HCT116 (cell line): ENCODE measurements at regions of chr16 and their contacts with region 1.

Region 1: GRCh38 chr16:70653809-70654771 is 7.7 kb downstream of the IL34 start:
- DNase-seq: peak; percentile 67
- ATAC-seq: peak; percentile 86
- H3K4me3 ChIP-seq: peak overlapping the region in 1 of 2 experiments; percentile 22; a peak in 1 of 4 replicates
- H3K27ac ChIP-seq: no peak overlapping the region
- H3K4me1 ChIP-seq: peaks cover 0 to 8% of the 10 kb centered on the region in 2 experiments; a peak in 2 of 4 replicates
- H3K27me3 ChIP-seq: no peaks in the 10 kb centered on the region
- CTCF ChIP-seq: peak; percentile 82 to 93 (median 91)
- POLR2A ChIP-seq: no peak
- RAD21 ChIP-seq: peak; percentile 98

Region 2: GRCh38 chr16:69796351-69797118 is 857.6 kb before region 1 on chr16:
- CTCF ChIA-PET with region 1: no interaction called
- POLR2A ChIA-PET with region 1: no interaction called
- RAD21 ChIA-PET with region 1: no interaction called
- intact Hi-C with region 1: loop called (anchors 5 kb)
- DNase-seq: peak; percentile 45
- ATAC-seq: peak; percentile 90
- H3K4me3 ChIP-seq: no peak overlapping the region
- H3K27ac ChIP-seq: no peak overlapping the region
- H3K4me1 ChIP-seq: no peaks in the 10 kb centered on the region
- H3K27me3 ChIP-seq: no peaks in the 10 kb centered on the region
- CTCF ChIP-seq: peak; percentile 77 to 86 (median 80)
- POLR2A ChIP-seq: no peak
- RAD21 ChIP-seq: peak; percentile 84

Region 3: DNA sequence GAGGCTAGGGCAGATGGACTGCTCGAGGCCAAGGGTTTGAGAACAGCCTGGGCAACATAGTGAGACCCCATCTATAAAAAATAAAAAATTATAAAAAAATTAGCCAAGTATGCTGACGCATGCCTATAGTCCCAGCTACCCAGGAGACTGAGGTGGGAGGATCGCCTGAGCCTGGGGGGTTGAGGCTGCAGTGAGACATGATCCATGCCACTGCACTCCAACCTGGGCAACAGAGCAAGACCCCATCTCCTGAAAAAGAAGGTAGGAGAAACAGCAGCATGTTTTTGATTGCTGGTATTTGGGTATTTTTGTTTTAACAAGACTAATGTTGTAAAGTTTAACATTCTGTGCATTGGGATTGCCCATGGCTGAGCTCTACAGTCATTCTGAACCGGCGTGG is 316.3 kb before region 1 on chr16:
- CTCF ChIA-PET with region 1: no interaction called
- POLR2A ChIA-PET with region 1: no interaction called
- RAD21 ChIA-PET with region 1: no interaction called
- intact Hi-C with region 1: loop called (anchors 5 kb)
- DNase-seq: no peak
- ATAC-seq: no peak
- H3K4me3 ChIP-seq: no peak overlapping the region
- H3K27ac ChIP-seq: no peak overlapping the region
- H3K4me1 ChIP-seq: no peaks in the 10 kb centered on the region; a peak in 1 of 4 replicates
- H3K27me3 ChIP-seq: no peaks in the 10 kb centered on the region
- CTCF ChIP-seq: no peak
- POLR2A ChIP-seq: no peak
- RAD21 ChIP-seq: no peak

Region 4: GRCh38 chr16:70364399-70364798 is 289.7 kb before region 1 on chr16:
- CTCF ChIA-PET with region 1: interaction called, 19 read pairs
- POLR2A ChIA-PET with region 1: no interaction called
- RAD21 ChIA-PET with region 1: no interaction called
- intact Hi-C with region 1: no loop called
- DNase-seq: no peak
- ATAC-seq: no peak
- H3K4me3 ChIP-seq: no peak overlapping the region
- H3K27ac ChIP-seq: no peak overlapping the region
- H3K4me1 ChIP-seq: no peaks in the 10 kb centered on the region
- H3K27me3 ChIP-seq: no peaks in the 10 kb centered on the region
- CTCF ChIP-seq: no peak
- POLR2A ChIP-seq: no peak
- RAD21 ChIP-seq: no peak

Region 5: DNA sequence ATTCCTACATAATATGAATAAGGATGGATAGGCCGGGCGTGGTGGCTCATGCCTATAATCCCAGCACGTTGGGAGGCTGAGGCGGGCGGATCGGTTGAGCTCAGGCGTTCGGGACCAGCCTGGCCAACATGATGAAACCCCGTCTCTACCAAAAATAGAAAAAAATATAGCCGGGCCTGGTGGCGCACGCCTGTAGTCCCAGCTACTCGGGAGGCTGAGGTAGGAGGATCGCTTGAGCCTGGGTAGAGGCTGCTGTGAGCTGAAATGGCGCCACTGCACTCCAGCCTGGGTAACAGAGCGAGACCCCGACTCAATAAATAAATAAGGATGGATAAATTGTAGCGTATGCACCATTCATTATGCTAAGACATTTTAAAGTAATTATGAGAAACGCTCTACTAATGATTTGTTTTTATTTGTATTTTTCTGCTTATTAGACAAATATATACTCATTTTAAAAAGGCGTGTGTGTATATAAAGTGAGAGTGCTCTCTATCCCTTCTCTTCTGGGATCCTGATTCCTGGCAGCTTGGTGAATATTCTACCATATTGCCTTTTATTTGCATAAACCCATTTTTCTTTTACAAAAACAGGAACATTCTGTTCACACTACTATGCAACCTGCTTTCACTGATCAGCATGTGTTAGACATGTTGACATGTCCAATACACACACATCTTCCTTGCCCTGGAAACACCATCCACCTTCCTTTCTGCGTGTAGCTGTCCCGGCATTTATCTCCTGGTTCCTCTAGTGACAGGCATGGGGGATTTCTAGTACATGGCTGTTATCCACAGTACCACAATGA is 281.0 kb before region 1 on chr16:
- CTCF ChIA-PET with region 1: interaction called, 19 read pairs
- POLR2A ChIA-PET with region 1: no interaction called
- RAD21 ChIA-PET with region 1: no interaction called
- intact Hi-C with region 1: loop called (anchors 2 kb)
- DNase-seq: no peak
- ATAC-seq: no peak
- H3K4me3 ChIP-seq: no peak overlapping the region
- H3K27ac ChIP-seq: no peak overlapping the region
- H3K4me1 ChIP-seq: no peaks in the 10 kb centered on the region; a peak in 1 of 4 replicates
- H3K27me3 ChIP-seq: no peaks in the 10 kb centered on the region
- CTCF ChIP-seq: no peak
- POLR2A ChIP-seq: no peak
- RAD21 ChIP-seq: no peak

Region 6: DNA sequence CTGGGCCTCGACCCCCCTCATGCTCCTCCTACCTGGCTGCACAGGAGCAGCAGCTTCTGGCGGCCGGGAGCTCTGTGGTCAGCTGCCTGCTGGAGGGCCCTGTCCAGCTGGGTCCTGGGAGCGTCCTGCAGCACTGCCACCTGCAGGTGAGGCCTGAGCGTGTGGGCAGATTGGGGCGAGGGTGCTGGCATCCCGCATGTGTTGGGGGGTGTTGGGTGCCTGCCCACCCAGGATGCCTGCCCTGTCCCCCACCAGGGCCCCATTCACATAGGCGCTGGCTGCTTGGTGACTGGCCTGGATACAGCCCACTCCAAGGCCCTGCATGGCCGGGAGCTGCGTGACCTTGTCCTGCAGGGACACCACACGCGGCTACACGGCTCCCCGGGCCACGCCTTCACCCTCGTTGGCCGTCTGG is 183.2 kb before region 1 on chr16:
- CTCF ChIA-PET with region 1: no interaction called
- POLR2A ChIA-PET with region 1: no interaction called
- RAD21 ChIA-PET with region 1: no interaction called
- intact Hi-C with region 1: no loop called
- DNase-seq: no peak
- ATAC-seq: peak; percentile 64
- H3K4me3 ChIP-seq: no peak overlapping the region
- H3K27ac ChIP-seq: no peak overlapping the region
- H3K4me1 ChIP-seq: peaks cover 12 to 13% of the 10 kb centered on the region in 2 experiments
- H3K27me3 ChIP-seq: no peaks in the 10 kb centered on the region
- CTCF ChIP-seq: peak; percentile 29 to 62 (median 43); a peak in 5 of 6 replicates
- POLR2A ChIP-seq: no peak
- RAD21 ChIP-seq: peak; percentile 75

Region 7: GRCh38 chr16:70523076-70523742 is 130.9 kb before region 1 on chr16 and contains the start of gene COG4:
- CTCF ChIA-PET with region 1: no interaction called
- POLR2A ChIA-PET with region 1: no interaction called
- RAD21 ChIA-PET with region 1: no interaction called
- intact Hi-C with region 1: loop called (anchors 10 kb)
- DNase-seq: peak; percentile 72
- ATAC-seq: peak; percentile 77
- H3K4me3 ChIP-seq: peak within 1 kb of the TSS; percentile 68 to 72
- H3K27ac ChIP-seq: peak within 1 kb of the TSS; percentile 71
- H3K4me1 ChIP-seq: peaks cover 7 to 16% of the 10 kb centered on the region in 2 experiments; a peak in 3 of 4 replicates
- H3K27me3 ChIP-seq: no peaks in the 10 kb centered on the region
- CTCF ChIP-seq: no peak
- POLR2A ChIP-seq: peak; percentile 41
- RAD21 ChIP-seq: no peak
- total RNA-seq, gene COG4: 54.2 TPM

Region 8: DNA sequence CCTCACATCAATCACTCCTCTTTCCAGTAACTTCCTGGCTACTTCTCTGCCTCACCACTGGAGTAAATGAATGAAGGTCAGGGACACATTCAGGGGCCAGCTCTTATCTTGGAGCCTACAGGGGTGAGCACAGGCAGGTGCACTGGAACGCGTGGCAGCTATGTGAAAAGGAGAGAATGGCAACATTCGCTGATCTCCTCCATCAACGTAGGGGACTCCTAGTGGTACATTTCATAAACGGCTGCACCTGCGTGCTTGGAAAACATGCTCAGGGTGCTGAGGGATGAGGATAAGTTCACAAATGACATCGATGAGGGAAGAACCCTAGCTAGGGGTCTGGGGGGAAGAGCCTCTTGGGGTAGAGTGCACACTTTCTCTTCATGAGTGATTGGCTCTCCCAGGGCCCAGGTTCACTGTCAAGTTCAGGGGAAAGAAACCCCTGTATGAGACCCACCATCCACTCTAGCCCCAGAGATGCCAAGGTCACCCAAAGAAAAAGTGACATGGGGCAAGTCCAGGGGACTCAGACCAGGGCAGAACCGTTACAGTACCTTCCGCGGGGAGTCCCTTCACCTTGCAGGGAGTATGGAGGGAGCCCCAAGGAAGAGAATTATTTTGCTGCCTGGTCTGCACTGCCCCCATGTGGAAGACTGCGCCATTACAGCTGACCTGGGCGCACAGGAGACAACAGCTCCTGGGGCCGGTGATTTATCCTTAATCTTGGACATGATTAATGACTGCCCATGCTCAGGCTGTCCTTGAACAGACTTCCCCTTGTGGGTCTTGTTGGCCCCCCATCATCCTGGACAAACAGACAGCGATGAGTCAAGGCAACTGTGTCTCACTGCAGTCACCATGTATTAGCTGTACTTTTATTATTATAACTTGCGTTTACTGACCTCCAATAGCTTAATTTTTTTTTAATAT is 116.8 kb after region 1 on chr16:
- CTCF ChIA-PET with region 1: interaction called, 43 read pairs
- POLR2A ChIA-PET with region 1: no interaction called
- RAD21 ChIA-PET with region 1: interaction called, 3 read pairs
- intact Hi-C with region 1: loop called (anchors 1 kb)
- DNase-seq: peak; percentile 32
- ATAC-seq: peak; percentile 87
- H3K4me3 ChIP-seq: no peak overlapping the region
- H3K27ac ChIP-seq: no peak overlapping the region
- H3K4me1 ChIP-seq: peaks cover 3 to 18% of the 10 kb centered on the region in 2 experiments
- H3K27me3 ChIP-seq: no peaks in the 10 kb centered on the region
- CTCF ChIP-seq: peak; percentile 84 to 97 (median 92)
- POLR2A ChIP-seq: no peak
- RAD21 ChIP-seq: peak; percentile 96

Region 9: DNA sequence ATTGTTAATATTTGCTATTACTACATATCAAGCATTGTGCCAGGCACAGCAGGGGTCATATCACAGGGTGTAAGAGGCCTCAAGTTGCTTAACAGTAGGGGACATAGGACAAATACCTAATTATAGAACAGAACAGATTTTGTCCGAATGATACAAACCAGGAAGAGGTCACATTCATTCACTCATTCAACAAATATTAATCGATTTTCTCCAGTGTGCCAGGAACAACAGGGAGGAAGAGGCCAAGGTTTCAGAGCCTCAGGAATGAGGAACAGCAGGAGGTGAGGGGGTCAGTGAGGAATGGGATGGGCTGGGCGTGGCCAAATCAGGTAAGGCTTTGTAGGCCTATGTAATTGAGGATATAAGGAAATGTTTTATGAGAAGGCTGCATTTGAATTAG is 860.9 kb after region 1 on chr16:
- CTCF ChIA-PET with region 1: no interaction called
- POLR2A ChIA-PET with region 1: no interaction called
- RAD21 ChIA-PET with region 1: no interaction called
- intact Hi-C with region 1: no loop called
- DNase-seq: no peak
- ATAC-seq: peak; percentile 36; the same call in 1 of the 2 replicates
- H3K4me3 ChIP-seq: no peak overlapping the region
- H3K27ac ChIP-seq: no peak overlapping the region
- H3K4me1 ChIP-seq: peaks cover 0 to 31% of the 10 kb centered on the region in 2 experiments; a peak in 1 of 4 replicates
- H3K27me3 ChIP-seq: no peaks in the 10 kb centered on the region
- CTCF ChIP-seq: no peak
- POLR2A ChIP-seq: no peak
- RAD21 ChIP-seq: no peak